HCT116 (cell line): ENCODE measurements at regions of chr6 and their contacts with region 1.

Region 1: DNA sequence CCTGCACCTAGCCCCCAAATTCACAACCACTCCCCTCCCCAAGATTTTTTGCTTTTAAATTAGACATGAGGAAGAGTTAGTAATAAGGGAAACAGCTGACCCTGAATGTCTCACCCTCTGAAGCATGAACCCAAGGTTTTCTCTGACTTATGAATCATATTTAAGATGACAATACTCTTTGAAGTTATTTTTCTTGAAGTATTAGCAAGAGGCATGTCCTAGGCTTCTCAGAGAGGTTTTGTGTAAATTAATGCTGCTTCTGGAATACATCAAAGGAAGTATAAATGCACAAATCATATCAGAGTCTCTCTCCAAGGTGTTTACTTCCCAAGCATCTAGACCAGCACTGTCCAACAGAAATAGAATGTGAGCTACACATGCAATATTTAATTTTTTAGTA is 408.1 kb upstream of the MARCKS start:
- DNase-seq: peak; percentile 45
- ATAC-seq: peak; percentile 70
- H3K4me3 ChIP-seq: no peak overlapping the region
- H3K27ac ChIP-seq: no peak overlapping the region
- H3K4me1 ChIP-seq: peaks cover 4 to 37% of the 10 kb centered on the region in 2 experiments; a peak in 3 of 4 replicates
- H3K27me3 ChIP-seq: no peaks in the 10 kb centered on the region
- CTCF ChIP-seq: no peak
- POLR2A ChIP-seq: no peak
- RAD21 ChIP-seq: no peak

Region 2: GRCh38 chr6:113362301-113363047 is 86.6 kb before region 1 on chr6:
- CTCF ChIA-PET with region 1: no interaction called
- POLR2A ChIA-PET with region 1: interaction called, 10 read pairs
- RAD21 ChIA-PET with region 1: no interaction called
- intact Hi-C with region 1: no loop called
- DNase-seq: no peak
- ATAC-seq: no peak
- H3K4me3 ChIP-seq: no peak overlapping the region
- H3K27ac ChIP-seq: no peak overlapping the region
- H3K4me1 ChIP-seq: peaks cover 21 to 59% of the 10 kb centered on the region in 2 experiments
- H3K27me3 ChIP-seq: no peaks in the 10 kb centered on the region
- CTCF ChIP-seq: no peak
- POLR2A ChIP-seq: no peak
- RAD21 ChIP-seq: no peak